ENCODE measurements at regions of chr19 and their contacts with region 1.

Region 1: DNA sequence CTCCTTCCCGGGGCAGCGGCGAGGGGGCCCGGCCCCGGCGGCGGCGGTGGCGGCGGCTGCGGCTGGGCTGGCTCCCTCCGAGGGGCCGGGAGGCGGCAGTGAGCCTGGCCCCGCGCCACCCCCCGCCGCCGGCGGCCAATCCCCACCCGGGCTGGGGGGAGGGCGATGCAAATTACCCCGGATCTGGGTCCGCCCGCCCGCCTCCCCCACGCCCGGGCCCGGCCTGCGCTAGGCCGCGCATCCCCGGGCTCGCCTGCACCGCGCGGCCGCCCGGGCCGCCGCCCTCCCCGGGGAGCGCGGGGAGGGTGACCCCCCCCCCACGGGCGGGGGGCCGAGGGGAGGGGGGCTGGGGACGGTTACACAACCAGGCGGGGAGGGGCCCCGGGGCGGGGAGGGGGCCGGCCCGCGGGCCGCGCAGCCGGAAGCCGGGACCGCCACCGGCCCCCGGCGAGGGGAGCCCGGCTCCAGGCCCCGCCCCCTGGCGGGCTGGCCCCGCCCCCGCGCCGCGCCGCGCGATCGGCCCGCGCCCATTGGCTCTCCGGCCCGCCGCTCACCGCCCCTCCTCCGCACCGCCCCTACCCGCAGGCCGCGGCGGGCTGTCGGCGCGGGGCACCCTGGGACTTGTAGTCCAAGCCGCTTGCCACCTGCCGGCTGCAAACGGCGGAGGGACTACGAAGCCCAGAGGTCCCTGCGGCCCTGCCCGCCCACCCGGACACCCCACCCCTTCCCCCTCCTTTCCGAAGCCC is 1.1 kb downstream of the ZBTB7A start:
- DNase-seq: peak; percentile 96 to 99 (median 98)
- H3K4me3 ChIP-seq: peak overlapping the region in 1 of 2 donors; percentile 70
- H3K4me3 Mint-ChIP-seq: peak overlapping the region; percentile 66 to 80 (median 76)
- H3K27ac ChIP-seq: no peak overlapping the region
- H3K27ac Mint-ChIP-seq: peak overlapping the region in 5 of 7 donors; percentile 35 to 80 (median 62)
- H3K4me1 ChIP-seq: peaks cover 64% of the 10 kb centered on the region
- H3K4me1 Mint-ChIP-seq: peaks cover 19 to 55% (median 37%) of the 10 kb centered on the region in 4 donors
- H3K27me3 ChIP-seq: no peaks in the 10 kb centered on the region
- H3K27me3 Mint-ChIP-seq: no peaks in the 10 kb centered on the region

Region 2: DNA sequence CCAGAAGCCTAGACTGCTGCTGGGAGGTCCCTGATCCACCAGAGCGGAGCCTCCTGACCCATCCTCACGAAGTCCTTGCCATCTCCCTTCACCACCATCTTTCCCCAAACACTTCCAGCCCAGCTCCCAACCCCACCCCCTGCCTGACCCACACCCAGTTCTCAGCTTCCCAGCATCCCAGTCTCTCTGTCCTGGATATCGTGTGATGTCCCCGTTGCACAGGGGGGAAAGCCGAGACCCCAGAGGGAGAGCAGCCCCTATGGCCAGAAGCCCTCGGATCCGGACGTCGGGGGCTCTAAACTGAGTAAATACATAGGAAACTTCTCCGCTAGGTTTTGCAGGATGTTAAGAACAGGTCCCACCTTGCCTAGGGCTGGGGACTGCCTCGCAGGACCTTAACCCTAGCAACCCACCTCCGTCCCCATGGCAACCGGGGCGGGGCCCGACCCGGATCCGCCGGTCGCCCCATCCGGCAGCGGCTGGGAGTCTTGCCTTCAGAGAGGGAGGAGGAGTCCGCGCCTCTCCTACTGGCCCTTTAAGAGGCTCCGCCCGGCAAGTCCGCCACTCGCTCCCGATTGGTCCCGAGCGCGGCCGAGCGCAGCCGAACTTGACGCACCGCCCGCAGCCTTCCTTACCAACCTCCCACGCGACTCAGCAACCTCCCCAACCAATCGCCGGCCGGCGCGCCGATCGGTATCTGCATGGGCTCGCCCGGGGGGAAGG is 493.3 kb before region 1 on chr19:
- CTCF ChIA-PET with region 1: no interaction called
- POLR2A ChIA-PET with region 1: no interaction called
- intact Hi-C with region 1: loop called (anchors 10 kb)
- DNase-seq: peak; percentile 97 to 100 (median 98)
- H3K4me3 ChIP-seq: peak overlapping the region; percentile 57 to 60
- H3K4me3 Mint-ChIP-seq: peak overlapping the region; percentile 75 to 86 (median 78)
- H3K27ac ChIP-seq: peak overlapping the region; percentile 44
- H3K27ac Mint-ChIP-seq: peak overlapping the region; percentile 33 to 92 (median 77)
- H3K4me1 ChIP-seq: peaks cover 15% of the 10 kb centered on the region
- H3K4me1 Mint-ChIP-seq: peaks cover 5 to 23% (median 17%) of the 10 kb centered on the region in 4 donors
- H3K27me3 ChIP-seq: no peaks in the 10 kb centered on the region
- H3K27me3 Mint-ChIP-seq: no peaks in the 10 kb centered on the region

Region 3: GRCh38 chr19:4007021-4007835 is 58.4 kb before region 1 on chr19 and contains the start of gene PIAS4:
- CTCF ChIA-PET with region 1: no interaction called
- POLR2A ChIA-PET with region 1: interaction called, 16 read pairs
- intact Hi-C with region 1: loop called (anchors 1 kb)
- DNase-seq: peak; percentile 95 to 97 (median 95)
- H3K4me3 ChIP-seq: peak within 1 kb of the TSS; percentile 47 to 73
- H3K4me3 Mint-ChIP-seq: peak within 1 kb of the TSS; percentile 83 to 92 (median 89)
- H3K27ac ChIP-seq: peak within 1 kb of the TSS; percentile 63
- H3K27ac Mint-ChIP-seq: peak within 1 kb of the TSS; percentile 81 to 91 (median 86)
- H3K4me1 ChIP-seq: peaks cover 42% of the 10 kb centered on the region
- H3K4me1 Mint-ChIP-seq: peaks cover 11 to 33% (median 18%) of the 10 kb centered on the region in 4 donors
- H3K27me3 ChIP-seq: no peaks in the 10 kb centered on the region
- H3K27me3 Mint-ChIP-seq: no peaks in the 10 kb centered on the region
- total RNA-seq, gene PIAS4: 38.6 to 42.6 TPM

Region 4: DNA sequence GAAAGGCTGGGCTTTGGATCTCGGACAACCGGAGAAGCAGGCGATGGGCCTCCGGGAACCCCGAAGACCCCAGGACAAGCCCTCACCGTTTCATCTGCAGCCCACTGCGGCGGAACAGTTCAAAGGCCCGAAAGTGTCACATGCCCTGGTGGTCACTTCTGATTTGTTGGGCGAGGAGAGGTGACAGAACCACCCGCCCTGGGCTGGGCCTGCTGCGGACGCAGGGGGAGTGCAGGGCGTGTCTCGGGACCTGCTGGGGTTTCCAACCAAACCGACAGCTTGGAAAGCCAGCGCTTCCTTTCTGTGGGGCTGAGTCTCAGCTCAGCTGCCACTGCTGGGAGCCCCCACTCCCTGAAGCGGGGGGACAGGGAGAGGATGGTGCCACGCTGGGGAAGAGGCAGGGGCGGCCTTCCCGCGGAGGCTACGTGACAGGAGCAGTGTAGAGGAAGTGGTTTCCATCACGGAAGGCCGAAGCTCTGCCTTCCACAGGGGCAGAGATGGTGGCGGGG is 23.9 kb after region 1 on chr19:
- CTCF ChIA-PET with region 1: interaction called, 3 read pairs
- POLR2A ChIA-PET with region 1: interaction called, 22 read pairs
- intact Hi-C with region 1: loop called (anchors 1 kb)
- DNase-seq: peak; percentile 42 to 71 (median 53)
- H3K4me3 ChIP-seq: no peak overlapping the region
- H3K4me3 Mint-ChIP-seq: peak overlapping the region; percentile 67 to 84 (median 72)
- H3K27ac ChIP-seq: peak overlapping the region; percentile 46
- H3K27ac Mint-ChIP-seq: peak overlapping the region; percentile 90 to 94 (median 92)
- H3K4me1 ChIP-seq: peaks cover 53% of the 10 kb centered on the region
- H3K4me1 Mint-ChIP-seq: peaks cover 16 to 53% (median 38%) of the 10 kb centered on the region in 4 donors
- H3K27me3 ChIP-seq: no peaks in the 10 kb centered on the region
- H3K27me3 Mint-ChIP-seq: no peaks in the 10 kb centered on the region

Region 5: GRCh38 chr19:4108767-4109625 is 43.4 kb after region 1 on chr19:
- CTCF ChIA-PET with region 1: interaction called, 5 read pairs
- POLR2A ChIA-PET with region 1: interaction called, 54 read pairs
- intact Hi-C with region 1: loop called (anchors 2 kb)
- DNase-seq: peak; percentile 73 to 87 (median 77)
- H3K4me3 ChIP-seq: no peak overlapping the region
- H3K4me3 Mint-ChIP-seq: peak overlapping the region; percentile 45 to 81 (median 68)
- H3K27ac ChIP-seq: peak overlapping the region; percentile 60
- H3K27ac Mint-ChIP-seq: peak overlapping the region; percentile 87 to 97 (median 95)
- H3K4me1 ChIP-seq: peaks cover 56% of the 10 kb centered on the region
- H3K4me1 Mint-ChIP-seq: peaks cover 19 to 72% (median 40%) of the 10 kb centered on the region in 4 donors
- H3K27me3 ChIP-seq: no peaks in the 10 kb centered on the region
- H3K27me3 Mint-ChIP-seq: no peaks in the 10 kb centered on the region

Region 6: GRCh38 chr19:4123615-4124568 is 58.3 kb after region 1 on chr19 and contains the start of gene MAP2K2:
- CTCF ChIA-PET with region 1: no interaction called
- POLR2A ChIA-PET with region 1: no interaction called
- intact Hi-C with region 1: loop called (anchors 1 kb)
- DNase-seq: peak; percentile 94 to 96 (median 95)
- H3K4me3 ChIP-seq: peak within 1 kb of the TSS; percentile 48 to 63
- H3K4me3 Mint-ChIP-seq: peak within 1 kb of the TSS; percentile 89 to 98 (median 92)
- H3K27ac ChIP-seq: peak within 1 kb of the TSS; percentile 74
- H3K27ac Mint-ChIP-seq: peak within 1 kb of the TSS; percentile 84 to 97 (median 96)
- H3K4me1 ChIP-seq: peaks cover 21% of the 10 kb centered on the region
- H3K4me1 Mint-ChIP-seq: peaks cover 15 to 30% (median 21%) of the 10 kb centered on the region in 4 donors
- H3K27me3 ChIP-seq: no peaks in the 10 kb centered on the region
- H3K27me3 Mint-ChIP-seq: no peaks in the 10 kb centered on the region
- total RNA-seq, gene MAP2K2: 125 to 126 TPM

Region 7: DNA sequence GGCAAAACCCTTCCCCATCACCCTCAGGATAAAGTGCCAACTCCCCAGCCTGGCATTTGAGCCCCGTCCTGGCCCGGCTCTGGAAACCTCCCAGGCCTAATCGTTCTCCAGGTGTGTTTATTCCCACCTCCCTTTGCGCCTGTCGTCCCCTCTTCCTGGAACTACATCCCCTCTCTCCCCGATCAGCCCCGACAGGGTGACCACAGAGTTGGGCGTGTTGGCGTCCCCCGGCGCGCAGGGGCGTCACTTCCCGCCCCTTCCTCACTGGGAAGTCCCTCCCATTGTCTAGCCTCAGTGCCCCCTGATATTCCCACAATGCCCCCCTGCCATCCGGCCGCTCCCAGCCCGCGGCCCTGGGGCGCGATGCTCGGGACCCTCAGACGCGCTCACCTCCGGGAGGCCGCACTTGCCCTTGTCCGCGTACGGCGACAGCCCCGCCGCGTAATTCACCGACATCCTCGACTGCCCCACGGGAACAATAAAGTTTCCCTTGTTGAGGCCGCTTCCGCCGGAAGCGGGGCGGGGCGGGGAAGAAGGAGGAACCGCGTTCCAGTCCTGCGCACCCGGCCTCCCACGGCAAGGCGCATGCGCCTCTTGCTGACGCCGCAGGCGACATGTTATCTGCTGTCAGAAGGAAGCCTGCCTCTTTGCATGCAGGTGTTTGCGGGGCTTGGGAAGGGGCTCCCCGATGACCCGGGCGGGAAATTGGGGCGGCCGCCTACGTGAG is 116.6 kb after region 1 on chr19 and contains the starts of genes ANKRD24 and SIRT6:
- CTCF ChIA-PET with region 1: no interaction called
- POLR2A ChIA-PET with region 1: interaction called, 3 read pairs
- intact Hi-C with region 1: loop called (anchors 5 kb)
- DNase-seq: peak; percentile 95 to 96 (median 96)
- H3K4me3 ChIP-seq: peak within 1 kb of the TSS; percentile 91 to 97
- H3K4me3 Mint-ChIP-seq: peak within 1 kb of the TSS; percentile 94 to 99 (median 96)
- H3K27ac ChIP-seq: peak within 1 kb of the TSS; percentile 81
- H3K27ac Mint-ChIP-seq: peak within 1 kb of the TSS; percentile 92 to 100 (median 96)
- H3K4me1 ChIP-seq: peaks cover 27% of the 10 kb centered on the region
- H3K4me1 Mint-ChIP-seq: peaks cover 30 to 41% (median 33%) of the 10 kb centered on the region in 4 donors
- H3K27me3 ChIP-seq: no peaks in the 10 kb centered on the region
- H3K27me3 Mint-ChIP-seq: peaks cover 0 to 3% of the 10 kb centered on the region in 2 donors
- total RNA-seq, gene ANKRD24: 1.9 to 2.9 TPM
- total RNA-seq, gene SIRT6: 26.8 to 27.0 TPM

Region 8: GRCh38 chr19:4322942-4323665 is 257.5 kb after region 1 on chr19:
- CTCF ChIA-PET with region 1: no interaction called
- POLR2A ChIA-PET with region 1: no interaction called
- intact Hi-C with region 1: no loop called
- DNase-seq: no peak
- H3K4me3 ChIP-seq: no peak overlapping the region
- H3K4me3 Mint-ChIP-seq: no peak overlapping the region
- H3K27ac ChIP-seq: no peak overlapping the region
- H3K27ac Mint-ChIP-seq: no peak overlapping the region
- H3K4me1 ChIP-seq: peaks cover 15% of the 10 kb centered on the region
- H3K4me1 Mint-ChIP-seq: peaks cover 8 to 18% (median 15%) of the 10 kb centered on the region in 4 donors
- H3K27me3 ChIP-seq: no peaks in the 10 kb centered on the region
- H3K27me3 Mint-ChIP-seq: no peaks in the 10 kb centered on the region

Measured in CD4-positive, alpha-beta memory T cell (primary cell).